Panc1 (cell line): ENCODE measurements at regions of chr9 and their contacts with region 1.

Region 1: GRCh38 chr9:35903049-35903448 is 3.0 kb upstream of the HRCT1 start:
- DNase-seq: no peak
- ATAC-seq: peak; percentile 47
- H3K4me3 ChIP-seq: no peak overlapping the region
- H3K27ac ChIP-seq: no peak overlapping the region
- H3K4me1 ChIP-seq: peaks cover 50% of the 10 kb centered on the region
- H3K27me3 ChIP-seq: 0 out of 2 replicates have a peak, but pooled peaks cover 2% of the 10 kb centered on the region
- CTCF ChIP-seq: no peak

Region 2: GRCh38 chr9:35844716-35845270 is 58.3 kb before region 1 on chr9:
- CTCF ChIA-PET with region 1: no interaction called
- POLR2A ChIA-PET with region 1: no interaction called
- in situ Hi-C with region 1: no loop called
- intact Hi-C with region 1: no loop called
- DNase-seq: no peak
- ATAC-seq: no peak
- H3K4me3 ChIP-seq: no peak overlapping the region
- H3K27ac ChIP-seq: no peak overlapping the region
- H3K4me1 ChIP-seq: no peaks in the 10 kb centered on the region; the same call in 1 of the 2 replicates
- H3K27me3 ChIP-seq: no peaks in the 10 kb centered on the region
- CTCF ChIP-seq: no peak

Region 3: DNA sequence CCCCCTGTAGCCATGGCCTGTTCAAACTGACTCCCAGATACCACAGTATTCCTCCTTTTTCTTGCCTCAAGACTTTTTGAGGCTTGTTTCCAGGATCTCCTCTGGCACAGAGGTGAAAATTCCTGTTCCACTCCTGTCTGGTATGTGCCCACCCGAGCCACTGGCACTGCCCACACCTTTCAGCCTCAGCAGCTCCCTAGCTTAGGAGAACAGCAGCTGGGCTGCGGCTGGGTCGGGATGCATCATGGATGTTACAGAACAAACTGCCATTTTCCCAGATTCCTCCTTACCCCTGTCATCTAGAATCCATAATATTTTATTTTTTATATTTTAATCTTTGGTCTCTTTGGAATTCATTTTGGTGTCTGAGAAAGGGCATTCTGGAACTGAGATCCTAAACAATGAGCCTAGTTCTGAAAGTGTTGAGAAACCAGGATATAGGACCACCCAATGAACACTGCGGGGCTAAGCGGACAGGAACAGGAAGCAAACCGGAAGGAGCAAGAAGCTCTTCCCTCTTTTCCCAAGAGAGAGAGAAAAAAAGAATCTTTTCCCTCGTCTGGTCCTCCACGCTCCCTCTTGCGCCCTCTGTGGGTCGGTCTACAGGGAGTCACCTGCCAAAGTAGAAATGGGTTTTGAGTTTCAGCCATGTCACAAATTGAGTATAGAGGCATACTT is 42.4 kb after region 1 on chr9:
- CTCF ChIA-PET with region 1: interaction called, 10 read pairs
- POLR2A ChIA-PET with region 1: interaction called, 4 read pairs
- in situ Hi-C with region 1: no loop called
- intact Hi-C with region 1: loop called (anchors 5 kb)
- DNase-seq: peak; percentile 20
- ATAC-seq: peak; percentile 84
- H3K4me3 ChIP-seq: no peak overlapping the region
- H3K27ac ChIP-seq: no peak overlapping the region
- H3K4me1 ChIP-seq: no peaks in the 10 kb centered on the region
- H3K27me3 ChIP-seq: no peaks in the 10 kb centered on the region
- CTCF ChIP-seq: peak; percentile 91

Region 4: DNA sequence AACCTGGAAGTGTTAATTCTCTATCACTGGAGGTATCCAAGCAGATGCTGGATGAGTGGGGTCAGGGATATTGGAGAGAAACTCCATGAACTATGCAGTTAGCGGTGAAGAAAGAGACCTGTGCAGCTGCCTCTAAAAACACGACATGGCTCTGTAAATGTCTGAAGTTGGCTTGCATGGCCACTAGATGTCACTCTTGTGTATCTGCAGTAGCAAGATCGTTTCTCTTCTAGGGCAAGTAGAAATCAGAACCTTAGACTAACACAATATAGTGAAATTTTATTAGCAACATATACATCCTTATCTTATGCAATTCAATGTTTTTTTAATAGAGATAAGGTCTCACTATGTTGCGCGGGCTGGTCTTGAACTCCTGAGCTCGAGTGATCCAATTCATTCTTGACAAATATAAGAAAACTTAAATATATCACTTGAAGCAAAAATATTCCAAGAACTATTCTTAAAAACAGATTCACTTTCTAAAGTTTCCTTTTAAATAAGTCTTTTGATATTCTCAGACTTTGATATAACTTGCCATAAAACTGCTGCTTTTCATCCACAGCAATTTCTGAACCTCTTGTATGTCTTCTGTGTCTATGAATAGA is 52.0 kb after region 1 on chr9:
- CTCF ChIA-PET with region 1: interaction called, 20 read pairs
- POLR2A ChIA-PET with region 1: no interaction called
- in situ Hi-C with region 1: no loop called
- intact Hi-C with region 1: no loop called
- DNase-seq: peak; percentile 48
- ATAC-seq: peak; percentile 94
- H3K4me3 ChIP-seq: no peak overlapping the region
- H3K27ac ChIP-seq: no peak overlapping the region
- H3K4me1 ChIP-seq: no peaks in the 10 kb centered on the region
- H3K27me3 ChIP-seq: peaks cover 18% of the 10 kb centered on the region
- CTCF ChIP-seq: peak; percentile 92

Region 5: DNA sequence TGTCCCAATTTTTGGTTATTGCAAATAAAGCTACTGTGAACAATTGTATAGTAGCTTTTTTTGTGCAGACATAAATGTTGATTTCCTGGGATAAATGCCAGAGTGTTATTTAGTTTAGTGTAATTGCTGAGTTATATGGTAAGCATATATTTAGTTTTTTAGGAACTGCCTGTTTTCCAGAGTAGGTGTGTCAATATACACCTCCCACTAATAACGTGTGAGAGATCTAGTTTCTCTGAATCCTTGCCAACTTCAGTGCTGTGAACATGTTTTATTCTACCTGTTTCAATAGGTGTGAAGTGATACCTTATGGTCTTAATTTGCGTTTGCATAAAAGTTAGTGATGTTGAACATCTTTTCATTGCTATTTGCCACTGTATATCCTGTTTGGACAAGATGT is 64.0 kb after region 1 on chr9:
- CTCF ChIA-PET with region 1: no interaction called
- POLR2A ChIA-PET with region 1: no interaction called
- in situ Hi-C with region 1: no loop called
- intact Hi-C with region 1: no loop called
- DNase-seq: no peak
- ATAC-seq: no peak
- H3K4me3 ChIP-seq: no peak overlapping the region
- H3K27ac ChIP-seq: no peak overlapping the region
- H3K4me1 ChIP-seq: no peaks in the 10 kb centered on the region
- H3K27me3 ChIP-seq: peaks cover 28% of the 10 kb centered on the region
- CTCF ChIP-seq: no peak

Region 6: GRCh38 chr9:36213989-36214388 is 310.9 kb after region 1 on chr9:
- CTCF ChIA-PET with region 1: no interaction called
- POLR2A ChIA-PET with region 1: interaction called, 10 read pairs
- in situ Hi-C with region 1: no loop called
- intact Hi-C with region 1: no loop called
- DNase-seq: no peak
- ATAC-seq: no peak
- H3K4me3 ChIP-seq: no peak overlapping the region
- H3K27ac ChIP-seq: no peak overlapping the region
- H3K4me1 ChIP-seq: peaks cover 6% of the 10 kb centered on the region; the same call in 1 of the 2 replicates
- H3K27me3 ChIP-seq: no peaks in the 10 kb centered on the region
- CTCF ChIP-seq: no peak